ENCODE measurements at regions of chr5 and their contacts with region 1.

Region 1: GRCh38 chr5:140346348-140347101 is at the start of gene HBEGF:
- DNase-seq: peak; percentile 74
- ATAC-seq: peak; percentile 82
- H3K4me3 ChIP-seq: peak within 1 kb of the TSS; percentile 66 to 76
- H3K27ac ChIP-seq: peak within 1 kb of the TSS; percentile 68
- H3K4me1 ChIP-seq: peaks cover 22 to 43% of the 10 kb centered on the region in 2 experiments
- H3K27me3 ChIP-seq: no peaks in the 10 kb centered on the region
- CTCF ChIP-seq: peak in 2 of 3 experiments; percentile 51 to 67; a peak in 4 of 6 replicates
- POLR2A ChIP-seq: peak; percentile 82
- RAD21 ChIP-seq: no peak
- total RNA-seq, gene HBEGF: 12.3 TPM

Region 2: DNA sequence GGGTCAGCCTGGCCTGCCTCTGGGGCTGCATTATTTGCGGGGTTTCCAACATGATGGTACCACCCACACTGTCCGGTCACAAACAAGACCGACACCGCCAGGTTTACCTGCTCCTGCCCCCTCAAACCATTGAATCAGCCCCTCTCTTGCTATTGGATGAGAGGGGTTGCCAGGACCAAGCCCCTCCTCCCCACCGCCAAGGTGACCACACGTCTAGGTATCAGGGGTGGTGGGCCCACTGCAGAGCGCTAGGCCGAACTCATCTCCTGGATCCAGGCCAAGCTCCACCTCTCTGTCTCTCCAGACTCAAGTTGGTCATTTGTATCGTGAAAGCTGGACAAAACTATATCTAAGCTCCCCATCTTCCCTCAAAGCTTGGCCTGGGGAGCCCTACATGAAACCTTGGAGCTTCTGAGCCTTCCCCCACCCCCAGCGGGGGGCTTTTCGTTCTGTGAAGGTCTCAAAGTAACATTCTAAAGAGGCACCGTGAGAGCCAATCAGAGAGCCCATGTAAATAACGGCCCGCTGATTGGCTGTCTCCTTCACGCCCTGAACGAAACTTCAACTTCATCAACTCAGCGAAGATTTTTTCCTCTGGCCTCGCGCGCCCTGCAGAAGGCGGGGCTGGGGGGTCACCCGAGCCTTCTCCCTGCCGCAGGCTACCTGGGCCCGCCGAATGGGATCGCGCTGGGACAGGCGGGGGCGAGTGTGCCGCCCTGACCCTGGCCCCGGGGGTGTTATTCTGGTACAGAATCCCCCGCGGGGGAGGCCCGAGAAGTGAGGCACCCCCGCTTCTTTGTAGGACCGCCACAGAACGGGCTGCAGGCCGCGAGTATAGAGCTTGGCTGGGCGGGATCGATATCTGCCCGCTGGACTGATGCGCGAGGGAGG is 600.5 kb before region 1 on chr5:
- CTCF ChIA-PET with region 1: no interaction called
- POLR2A ChIA-PET with region 1: no interaction called
- RAD21 ChIA-PET with region 1: no interaction called
- intact Hi-C with region 1: no loop called
- DNase-seq: peak; percentile 72
- ATAC-seq: peak; percentile 83
- H3K4me3 ChIP-seq: peak overlapping the region; percentile 24 to 42
- H3K27ac ChIP-seq: peak overlapping the region; percentile 31; the same call in 1 of the 2 replicates
- H3K4me1 ChIP-seq: peaks cover 18 to 27% of the 10 kb centered on the region in 2 experiments
- H3K27me3 ChIP-seq: no peaks in the 10 kb centered on the region
- CTCF ChIP-seq: no peak
- POLR2A ChIP-seq: no peak
- RAD21 ChIP-seq: no peak

Region 3: DNA sequence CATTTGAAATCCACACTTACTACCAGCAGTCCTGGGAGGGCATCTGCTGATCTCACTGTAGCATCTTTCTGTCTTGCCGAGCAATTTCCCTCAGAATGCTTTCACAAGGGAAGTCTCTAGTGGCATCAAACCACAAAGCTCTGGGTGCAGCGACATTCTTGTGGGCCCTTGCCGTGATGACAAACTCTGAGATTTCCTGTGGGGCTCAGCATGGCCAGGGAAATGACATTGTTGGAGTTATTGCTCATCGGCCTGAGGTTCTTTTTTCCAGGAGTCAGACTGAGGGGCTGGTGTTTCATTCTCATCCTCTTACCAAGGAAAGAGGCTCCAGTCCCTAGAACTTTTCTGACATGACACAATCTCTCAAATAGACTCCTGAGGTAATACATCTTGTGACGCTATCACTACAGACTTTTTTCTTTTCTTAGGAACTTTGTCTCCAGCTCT is 95.0 kb before region 1 on chr5:
- CTCF ChIA-PET with region 1: interaction called, 76 read pairs
- POLR2A ChIA-PET with region 1: interaction called, 16 read pairs
- RAD21 ChIA-PET with region 1: no interaction called
- intact Hi-C with region 1: no loop called
- DNase-seq: peak; percentile 67
- ATAC-seq: peak; percentile 82
- H3K4me3 ChIP-seq: no peak overlapping the region
- H3K27ac ChIP-seq: peak overlapping the region; percentile 41; the same call in 1 of the 2 replicates
- H3K4me1 ChIP-seq: peaks cover 13 to 35% of the 10 kb centered on the region in 2 experiments
- H3K27me3 ChIP-seq: no peaks in the 10 kb centered on the region
- CTCF ChIP-seq: no peak
- POLR2A ChIP-seq: no peak
- RAD21 ChIP-seq: peak; percentile 15; the same call in 1 of the 2 replicates

Region 4: DNA sequence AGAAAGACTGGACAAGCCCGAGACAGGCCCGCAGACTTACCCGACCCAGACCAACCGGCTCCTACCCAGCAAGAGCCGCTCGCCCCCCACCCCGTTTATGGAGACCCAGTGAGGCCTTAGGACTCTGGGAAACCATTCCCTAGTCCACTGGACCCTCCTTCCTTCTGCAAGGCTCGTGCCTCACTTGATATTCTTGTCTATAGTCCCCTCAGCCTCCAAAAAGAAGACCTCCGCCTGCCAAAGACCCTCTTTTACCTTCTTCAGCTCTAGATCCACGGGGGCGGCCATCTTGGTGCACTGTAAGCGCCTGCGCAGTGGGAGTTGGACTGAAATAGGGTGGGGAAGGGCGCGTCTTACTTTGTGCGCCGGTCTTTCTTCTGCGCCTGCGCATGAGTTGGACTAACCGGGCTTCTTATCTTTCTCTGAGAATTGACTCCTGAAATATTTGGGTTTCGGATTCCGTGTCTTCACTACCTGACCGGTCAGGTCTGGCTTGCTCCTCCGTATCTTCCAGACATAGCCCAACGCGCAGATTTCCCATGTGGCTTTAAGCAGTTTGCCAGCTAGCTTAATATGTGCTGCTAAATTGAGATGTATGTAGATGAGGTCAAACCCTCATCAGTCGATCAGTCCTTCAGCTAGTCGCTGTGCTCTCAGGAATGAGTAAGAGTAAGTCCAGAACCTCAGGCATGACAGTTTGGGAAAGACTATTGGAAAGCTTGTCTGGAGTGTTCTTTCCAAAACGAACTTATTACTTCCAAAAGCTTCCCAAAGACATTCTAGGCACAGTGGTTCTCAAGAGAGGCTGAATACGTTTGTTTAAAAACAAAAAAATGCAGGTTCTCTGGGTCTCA is 43.5 kb before region 1 on chr5 and contains the start of gene PFDN1:
- CTCF ChIA-PET with region 1: interaction called, 4 read pairs
- POLR2A ChIA-PET with region 1: interaction called, 16 read pairs
- RAD21 ChIA-PET with region 1: no interaction called
- intact Hi-C with region 1: no loop called
- DNase-seq: peak; percentile 81
- ATAC-seq: peak; percentile 91
- H3K4me3 ChIP-seq: peak within 1 kb of the TSS; percentile 79 to 87
- H3K27ac ChIP-seq: peak within 1 kb of the TSS; percentile 47
- H3K4me1 ChIP-seq: peaks cover 22 to 42% of the 10 kb centered on the region in 2 experiments
- H3K27me3 ChIP-seq: no peaks in the 10 kb centered on the region
- CTCF ChIP-seq: no peak
- POLR2A ChIP-seq: peak; percentile 81
- RAD21 ChIP-seq: no peak
- total RNA-seq, gene PFDN1: 48.9 TPM

Region 5: GRCh38 chr5:140336388-140336787 is 10.1 kb before region 1 on chr5:
- CTCF ChIA-PET with region 1: interaction called, 4 read pairs
- POLR2A ChIA-PET with region 1: interaction called, 21 read pairs
- RAD21 ChIA-PET with region 1: no interaction called
- intact Hi-C with region 1: no loop called
- DNase-seq: no peak
- ATAC-seq: no peak
- H3K4me3 ChIP-seq: no peak overlapping the region
- H3K27ac ChIP-seq: no peak overlapping the region
- H3K4me1 ChIP-seq: no peaks in the 10 kb centered on the region
- H3K27me3 ChIP-seq: no peaks in the 10 kb centered on the region
- CTCF ChIP-seq: no peak
- POLR2A ChIP-seq: no peak
- RAD21 ChIP-seq: no peak

Region 6: GRCh38 chr5:140362860-140363630 is 16.5 kb after region 1 on chr5:
- CTCF ChIA-PET with region 1: interaction called, 43 read pairs
- POLR2A ChIA-PET with region 1: interaction called, 19 read pairs
- RAD21 ChIA-PET with region 1: interaction called in 1 of 2 experiments, 4 read pairs
- intact Hi-C with region 1: no loop called
- DNase-seq: peak; percentile 65
- ATAC-seq: peak; percentile 90
- H3K4me3 ChIP-seq: peak overlapping the region; percentile 31 to 49
- H3K27ac ChIP-seq: no peak overlapping the region; the same call in 1 of the 2 replicates
- H3K4me1 ChIP-seq: peaks cover 3 to 38% of the 10 kb centered on the region in 2 experiments; a peak in 3 of 4 replicates
- H3K27me3 ChIP-seq: no peaks in the 10 kb centered on the region
- CTCF ChIP-seq: peak in 2 of 3 experiments; percentile 94 to 99; a peak in 4 of 6 replicates
- POLR2A ChIP-seq: no peak
- RAD21 ChIP-seq: no peak